AG04449 (cell line): ENCODE measurements at regions of chr2 and their contacts with region 1.

Region 1: DNA sequence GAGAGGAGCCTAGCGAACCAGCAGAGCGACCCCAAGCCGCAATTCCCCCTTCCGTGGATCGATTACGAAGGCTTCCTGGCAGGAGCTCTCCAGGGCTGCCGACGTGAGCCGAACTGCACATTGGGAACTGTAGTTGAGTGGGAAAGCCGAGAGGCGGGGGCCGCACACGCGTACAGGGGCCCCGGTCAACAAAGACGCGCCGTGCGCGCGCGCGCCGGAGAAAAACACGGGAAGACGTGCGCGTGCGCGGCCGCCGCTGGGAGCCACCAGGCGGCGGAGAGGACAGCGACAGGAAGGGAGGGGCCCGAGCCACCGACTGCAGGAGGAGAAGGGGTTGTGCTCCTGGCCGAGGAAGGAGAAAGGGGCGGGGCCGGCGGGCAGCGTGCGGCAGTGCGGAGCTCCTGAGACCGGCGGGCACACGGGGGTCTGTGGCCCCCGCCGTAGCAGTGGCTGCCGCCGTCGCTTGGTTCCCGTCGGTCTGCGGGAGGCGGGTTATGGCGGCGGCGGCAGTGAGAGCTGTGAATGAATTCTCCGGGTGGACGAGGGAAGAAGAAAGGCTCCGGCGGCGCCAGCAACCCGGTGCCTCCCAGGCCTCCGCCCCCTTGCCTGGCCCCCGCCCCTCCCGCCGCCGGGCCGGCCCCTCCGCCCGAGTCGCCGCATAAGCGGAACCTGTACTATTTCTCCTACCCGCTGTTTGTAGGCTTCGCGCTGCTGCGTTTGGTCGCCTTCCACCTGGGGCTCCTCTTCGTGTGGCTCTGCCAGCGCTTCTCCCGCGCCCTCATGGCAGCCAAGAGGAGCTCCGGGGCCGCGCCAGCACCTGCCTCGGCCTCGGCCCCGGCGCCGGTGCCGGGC is at the start of gene SPAST:
- DNase-seq: peak; percentile 59
- H3K4me3 ChIP-seq: peak within 1 kb of the TSS; percentile 78
- CTCF ChIP-seq: peak; percentile 76

Region 2: DNA sequence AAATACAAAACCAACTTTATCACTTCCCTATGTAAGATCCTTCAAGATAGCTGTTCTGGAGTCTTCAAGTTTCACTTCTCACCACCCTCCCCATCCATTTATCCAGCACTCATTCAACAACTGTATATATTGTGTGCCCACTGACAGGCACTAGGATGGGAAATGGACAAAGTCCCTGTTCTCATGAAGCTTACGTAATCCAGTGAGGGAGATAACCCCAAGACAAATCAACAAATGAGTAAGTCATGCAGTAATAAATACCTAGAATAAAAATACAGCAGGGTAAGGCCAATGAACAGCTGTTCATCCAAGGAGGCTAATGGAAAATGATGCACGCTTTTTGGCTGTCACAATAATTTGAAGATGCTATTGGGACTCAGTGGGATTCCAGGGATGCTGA is 186.5 kb before region 1 on chr2:
- CTCF ChIA-PET with region 1: no interaction called
- POLR2A ChIA-PET with region 1: no interaction called
- DNase-seq: no peak
- H3K4me3 ChIP-seq: no peak overlapping the region
- CTCF ChIP-seq: no peak

Region 3: DNA sequence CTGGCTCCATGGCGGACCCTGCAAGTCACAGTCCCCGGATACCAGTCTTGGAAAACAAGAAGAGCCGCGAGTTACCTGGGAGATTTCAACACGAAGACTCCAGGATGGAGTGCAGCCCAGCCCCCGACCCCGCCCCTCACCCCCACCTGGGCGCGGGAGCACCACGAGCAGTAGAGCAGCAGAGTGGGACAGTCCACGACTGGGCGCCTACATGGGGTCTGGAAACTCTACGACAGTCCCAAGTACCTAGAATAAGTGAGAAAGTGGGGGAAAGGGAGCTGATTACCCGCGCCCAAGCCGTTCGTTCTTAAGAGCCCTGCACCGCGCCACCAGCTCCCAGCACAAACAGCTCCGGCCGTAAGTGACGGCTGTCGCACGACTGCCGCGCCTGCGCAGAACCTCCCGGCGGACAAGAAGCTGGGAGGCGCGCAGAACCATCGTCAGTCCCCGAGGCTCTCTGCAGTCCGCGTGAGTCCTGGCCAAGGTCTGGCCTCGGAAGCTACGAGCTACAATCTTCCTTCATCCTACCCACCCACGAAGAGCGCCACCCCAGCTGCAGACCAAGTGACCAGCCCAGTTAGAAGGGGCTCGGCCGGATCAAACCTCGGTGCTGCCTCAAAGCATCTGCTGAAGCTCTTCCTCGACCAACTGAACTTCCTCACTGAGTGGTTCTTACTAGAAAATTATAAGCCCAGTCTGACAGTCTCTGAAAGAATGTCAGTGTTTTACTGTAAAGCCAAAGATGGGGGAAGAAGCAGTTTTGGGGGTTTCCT is 23.9 kb before region 1 on chr2 and contains the start of gene DPY30:
- CTCF ChIA-PET with region 1: no interaction called
- POLR2A ChIA-PET with region 1: interaction called, 23 read pairs
- DNase-seq: peak; percentile 23
- H3K4me3 ChIP-seq: peak within 1 kb of the TSS; percentile 82
- CTCF ChIP-seq: no peak